GM12878 (cell line): ENCODE measurements at regions of chr1 and their contacts with region 1.

Region 1: DNA sequence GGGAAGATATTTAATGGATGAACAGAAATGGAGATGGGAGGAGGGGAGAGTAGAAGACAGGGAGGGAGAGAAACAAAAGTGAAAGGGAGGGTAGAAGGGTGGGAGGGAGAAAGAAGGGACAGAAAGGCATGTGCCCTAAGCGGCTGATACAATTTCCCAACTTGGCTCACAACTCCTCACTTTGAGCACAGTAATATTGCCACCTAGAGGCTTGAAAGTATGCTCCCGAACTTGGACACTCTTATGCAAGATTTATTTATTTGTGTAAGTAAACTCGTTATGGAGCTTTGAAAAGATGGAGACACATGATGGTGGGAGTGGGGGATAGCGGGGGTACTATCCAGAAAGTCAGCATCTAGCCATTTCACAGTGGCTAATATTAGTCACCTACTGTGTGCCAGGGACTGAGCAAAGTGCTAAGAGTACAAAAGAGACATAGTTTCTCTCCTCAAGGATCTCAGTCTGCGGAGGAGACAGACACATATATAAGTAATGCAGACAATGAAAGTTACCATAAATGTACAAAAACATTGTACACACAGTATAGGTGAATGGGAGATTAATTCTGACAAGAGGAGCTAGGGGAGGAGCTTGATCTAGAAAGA is 189.7 kb downstream of the SEC16B start:
- DNase-seq: no peak
- ATAC-seq: peak; percentile 81
- H3K4me3 ChIP-seq: no peak overlapping the region
- H3K27ac ChIP-seq: no peak overlapping the region
- H3K4me1 ChIP-seq: no peaks in the 10 kb centered on the region
- H3K27me3 ChIP-seq: no peaks in the 10 kb centered on the region
- CTCF ChIP-seq: peak; percentile 31 to 50 (median 34); a peak in 4 of 6 replicates
- EP300 ChIP-seq: no peak
- POLR2A ChIP-seq: no peak
- RAD21 ChIP-seq: peak; percentile 57

Region 2: DNA sequence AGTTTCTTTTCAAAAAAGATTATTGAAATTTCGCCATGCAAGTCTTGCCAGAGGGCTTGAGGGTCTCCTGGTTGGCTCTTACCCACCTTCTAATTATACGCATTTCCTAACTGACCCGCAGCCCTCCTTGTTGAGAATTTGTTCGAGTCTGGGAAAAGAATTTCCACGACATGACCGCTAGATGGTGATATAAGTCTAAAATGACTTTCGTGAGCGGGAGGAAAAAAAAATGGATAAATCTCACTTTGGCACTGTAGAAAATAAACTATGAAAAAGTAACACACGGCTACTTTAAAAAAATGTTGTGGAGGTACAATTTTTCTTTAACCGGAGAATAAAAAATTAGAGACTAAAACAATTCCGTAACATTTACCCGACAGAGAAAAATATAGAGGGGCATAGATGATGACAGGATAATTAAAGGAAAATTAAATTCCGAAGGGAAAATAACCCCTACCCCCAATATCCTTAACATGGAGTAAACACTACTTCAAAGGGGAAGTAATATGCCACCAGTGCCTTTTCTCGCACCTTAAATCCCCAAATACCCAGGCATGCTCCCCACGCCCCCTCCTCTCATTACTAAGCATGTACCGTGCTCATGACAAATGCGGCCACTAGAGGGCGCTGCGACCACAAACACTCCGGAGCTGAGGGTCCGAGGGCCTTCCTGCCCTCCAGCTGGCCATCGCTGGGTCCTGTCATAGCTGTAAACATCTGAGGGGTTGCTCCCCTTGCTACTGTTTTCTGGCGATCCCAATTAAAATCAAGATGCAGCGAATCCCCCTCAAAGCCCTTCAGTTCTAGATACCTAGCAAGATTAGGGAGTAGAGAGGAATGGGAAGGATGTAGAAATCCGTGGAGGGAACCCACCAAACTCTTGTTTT is 882.6 kb before region 1 on chr1:
- CTCF ChIA-PET with region 1: no interaction called
- POLR2A ChIA-PET with region 1: no interaction called
- RAD21 ChIA-PET with region 1: interaction called, 6 read pairs
- SMC1A ChIA-PET with region 1: no interaction called
- in situ Hi-C with region 1: no loop called
- intact Hi-C with region 1: loop called (anchors 1 kb)
- DNase-seq: no peak
- ATAC-seq: peak; percentile 92
- H3K4me3 ChIP-seq: no peak overlapping the region
- H3K27ac ChIP-seq: no peak overlapping the region
- H3K4me1 ChIP-seq: no peaks in the 10 kb centered on the region
- H3K27me3 ChIP-seq: no peaks in the 10 kb centered on the region; a peak in 1 of 4 replicates
- CTCF ChIP-seq: peak; percentile 64 to 85 (median 68)
- EP300 ChIP-seq: no peak
- POLR2A ChIP-seq: no peak
- RAD21 ChIP-seq: peak; percentile 70

Region 3: GRCh38 chr1:177432897-177433296 is 347.3 kb before region 1 on chr1:
- CTCF ChIA-PET with region 1: interaction called, 7 read pairs
- POLR2A ChIA-PET with region 1: no interaction called
- RAD21 ChIA-PET with region 1: interaction called, 3 read pairs
- SMC1A ChIA-PET with region 1: interaction called, 3 read pairs
- in situ Hi-C with region 1: no loop called
- intact Hi-C with region 1: loop called (anchors 10 kb)
- DNase-seq: no peak
- ATAC-seq: peak; percentile 66
- H3K4me3 ChIP-seq: no peak overlapping the region
- H3K27ac ChIP-seq: no peak overlapping the region
- H3K4me1 ChIP-seq: no peaks in the 10 kb centered on the region
- H3K27me3 ChIP-seq: no peaks in the 10 kb centered on the region
- CTCF ChIP-seq: no peak
- EP300 ChIP-seq: no peak
- POLR2A ChIP-seq: no peak
- RAD21 ChIP-seq: no peak

Region 4: GRCh38 chr1:177558372-177558771 is 221.8 kb before region 1 on chr1:
- CTCF ChIA-PET with region 1: interaction called, 3 read pairs
- POLR2A ChIA-PET with region 1: no interaction called
- RAD21 ChIA-PET with region 1: interaction called, 3 read pairs
- SMC1A ChIA-PET with region 1: interaction called, 5 read pairs
- in situ Hi-C with region 1: no loop called
- intact Hi-C with region 1: loop called (anchors 10 kb)
- DNase-seq: no peak
- ATAC-seq: peak; percentile 68
- H3K4me3 ChIP-seq: no peak overlapping the region
- H3K27ac ChIP-seq: no peak overlapping the region
- H3K4me1 ChIP-seq: no peaks in the 10 kb centered on the region
- H3K27me3 ChIP-seq: no peaks in the 10 kb centered on the region
- CTCF ChIP-seq: no peak
- EP300 ChIP-seq: no peak
- POLR2A ChIP-seq: no peak
- RAD21 ChIP-seq: no peak

Region 5: GRCh38 chr1:177913762-177914540 is 133.8 kb after region 1 on chr1:
- CTCF ChIA-PET with region 1: interaction called, 18 read pairs
- POLR2A ChIA-PET with region 1: no interaction called
- RAD21 ChIA-PET with region 1: interaction called, 13 read pairs
- SMC1A ChIA-PET with region 1: interaction called, 7 read pairs
- in situ Hi-C with region 1: no loop called
- intact Hi-C with region 1: no loop called
- DNase-seq: no peak
- ATAC-seq: peak; percentile 58
- H3K4me3 ChIP-seq: no peak overlapping the region
- H3K27ac ChIP-seq: no peak overlapping the region
- H3K4me1 ChIP-seq: no peaks in the 10 kb centered on the region
- H3K27me3 ChIP-seq: no peaks in the 10 kb centered on the region; a peak in 1 of 4 replicates
- CTCF ChIP-seq: peak; percentile 22 to 31 (median 27); a peak in 3 of 6 replicates
- EP300 ChIP-seq: no peak
- POLR2A ChIP-seq: no peak
- RAD21 ChIP-seq: 0 out of 2 replicates have a peak, but pooled peaks have one; percentile 6